Activated B cell treated with CpG ODN at 0.5 μM for 24 hours (primary cell): ENCODE measurements at regions of chr1 and their contacts with region 1.

Region 1: DNA sequence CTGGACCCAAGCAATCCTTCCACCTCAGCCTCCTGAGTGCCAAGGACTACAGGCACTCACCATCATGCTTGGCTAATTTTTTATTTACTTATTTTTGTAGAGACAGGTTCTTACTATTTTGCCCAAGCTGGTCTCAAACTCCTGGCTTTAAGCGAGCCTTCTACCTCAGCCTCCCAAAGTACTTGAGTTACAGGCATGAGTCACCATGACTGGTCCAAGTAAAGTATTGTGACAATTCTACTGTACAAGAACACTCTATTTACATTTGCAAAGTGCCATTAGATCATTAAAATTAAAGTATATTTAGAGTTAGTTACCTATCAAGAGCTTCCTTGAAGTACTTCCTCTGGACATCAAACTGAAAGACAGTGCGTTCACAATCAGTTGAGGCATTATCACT is 44.8 kb downstream of the NRDC start:
- DNase-seq: no peak
- ATAC-seq: no peak
- H3K4me3 Mint-ChIP-seq: no peak overlapping the region
- H3K27ac Mint-ChIP-seq: no peak overlapping the region
- H3K4me1 Mint-ChIP-seq: no peaks in the 10 kb centered on the region
- H3K27me3 Mint-ChIP-seq: no peaks in the 10 kb centered on the region
- CTCF ChIP-seq: no peak

Region 2: GRCh38 chr1:51736702-51737101 is 97.0 kb before region 1 on chr1:
- CTCF ChIA-PET with region 1: no interaction called
- POLR2A ChIA-PET with region 1: no interaction called
- intact Hi-C with region 1: no loop called
- DNase-seq: no peak
- ATAC-seq: no peak
- H3K4me3 Mint-ChIP-seq: no peak overlapping the region
- H3K27ac Mint-ChIP-seq: no peak overlapping the region
- H3K4me1 Mint-ChIP-seq: peaks cover 52% of the 10 kb centered on the region
- H3K27me3 Mint-ChIP-seq: no peaks in the 10 kb centered on the region
- CTCF ChIP-seq: no peak

Region 3: DNA sequence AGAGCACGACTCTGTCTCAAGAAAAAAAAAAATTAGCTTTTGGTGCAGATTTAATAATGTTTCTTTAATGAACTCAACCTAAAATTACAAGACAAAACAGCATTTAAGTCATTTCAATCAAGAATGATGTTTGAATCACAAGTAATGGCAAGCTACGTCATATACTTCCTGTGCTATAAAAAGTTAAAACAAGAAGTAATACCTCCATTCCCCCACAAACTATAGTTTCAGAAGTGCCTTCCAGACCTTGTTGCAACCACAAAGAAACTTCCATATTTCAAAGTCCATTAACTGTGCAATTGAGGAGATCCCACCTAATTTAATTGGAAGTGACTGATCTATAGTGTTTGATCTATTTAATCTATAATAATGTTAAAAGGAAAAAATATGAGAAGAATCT is 29.7 kb after region 1 on chr1:
- CTCF ChIA-PET with region 1: no interaction called
- POLR2A ChIA-PET with region 1: no interaction called
- intact Hi-C with region 1: loop called (anchors 2 kb)
- DNase-seq: no peak
- ATAC-seq: peak; percentile 69
- H3K4me3 Mint-ChIP-seq: peak overlapping the region; percentile 1
- H3K27ac Mint-ChIP-seq: peak overlapping the region; percentile 77
- H3K4me1 Mint-ChIP-seq: peaks cover 40% of the 10 kb centered on the region
- H3K27me3 Mint-ChIP-seq: no peaks in the 10 kb centered on the region
- CTCF ChIP-seq: no peak